Pancreas (tissue), 10 donors: ENCODE measurements at regions of chr9 and their contacts with region 1.

Region 1: DNA sequence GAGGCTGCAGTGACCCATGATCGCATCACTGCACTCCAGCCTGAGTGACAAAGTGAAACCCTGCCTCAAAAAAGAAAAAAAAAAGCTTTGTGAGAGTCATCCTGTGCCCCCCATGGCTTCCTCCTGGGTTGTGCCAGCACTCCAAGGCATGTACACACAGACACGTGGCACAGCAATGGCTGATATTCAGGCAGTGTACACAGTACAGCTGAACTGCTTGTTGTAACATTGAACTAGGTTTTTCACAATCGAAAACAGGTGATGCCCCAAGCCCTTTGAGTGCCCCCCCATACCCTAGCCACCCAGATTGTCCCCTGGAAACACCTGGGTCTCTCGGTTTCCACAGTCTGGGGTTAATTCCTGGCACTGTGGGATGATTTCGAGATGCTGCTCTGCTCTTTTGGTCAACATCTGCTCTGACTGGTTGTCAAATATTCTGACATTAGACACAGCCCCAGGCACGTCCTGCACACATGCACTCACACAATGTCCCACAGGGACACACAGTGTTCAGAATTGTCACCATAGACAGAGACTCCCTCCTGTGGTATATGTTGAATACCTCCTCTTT is 9.2 kb downstream of the SPINK4 start:
- DNase-seq: no peak
- ATAC-seq: no peak
- H3K4me3 ChIP-seq: no peak overlapping the region
- H3K27ac ChIP-seq: no peak overlapping the region
- H3K4me1 ChIP-seq: no peaks in the 10 kb centered on the region
- H3K27me3 ChIP-seq: no peaks in the 10 kb centered on the region
- CTCF ChIP-seq: no peak

Region 2: GRCh38 chr9:32703635-32704034 is 545.5 kb before region 1 on chr9:
- intact Hi-C with region 1: no loop called
- DNase-seq: no peak
- ATAC-seq: no peak
- H3K4me3 ChIP-seq: no peak overlapping the region
- H3K27ac ChIP-seq: no peak overlapping the region
- H3K4me1 ChIP-seq: no peaks in the 10 kb centered on the region
- H3K27me3 ChIP-seq: no peaks in the 10 kb centered on the region
- CTCF ChIP-seq: no peak

Region 3: GRCh38 chr9:33106827-33107621 is 142.1 kb before region 1 on chr9:
- intact Hi-C with region 1: no loop called
- DNase-seq: peak in 2 of 6 donors; percentile 34 to 42
- ATAC-seq: peak; percentile 44 to 64 (median 54)
- H3K4me3 ChIP-seq: no peak overlapping the region
- H3K27ac ChIP-seq: peak overlapping the region in 2 of 4 donors; percentile 21 to 44
- H3K4me1 ChIP-seq: peaks cover 0 to 9% (median 0%) of the 10 kb centered on the region in 3 donors
- H3K27me3 ChIP-seq: no peaks in the 10 kb centered on the region
- CTCF ChIP-seq: no peak

Region 4: DNA sequence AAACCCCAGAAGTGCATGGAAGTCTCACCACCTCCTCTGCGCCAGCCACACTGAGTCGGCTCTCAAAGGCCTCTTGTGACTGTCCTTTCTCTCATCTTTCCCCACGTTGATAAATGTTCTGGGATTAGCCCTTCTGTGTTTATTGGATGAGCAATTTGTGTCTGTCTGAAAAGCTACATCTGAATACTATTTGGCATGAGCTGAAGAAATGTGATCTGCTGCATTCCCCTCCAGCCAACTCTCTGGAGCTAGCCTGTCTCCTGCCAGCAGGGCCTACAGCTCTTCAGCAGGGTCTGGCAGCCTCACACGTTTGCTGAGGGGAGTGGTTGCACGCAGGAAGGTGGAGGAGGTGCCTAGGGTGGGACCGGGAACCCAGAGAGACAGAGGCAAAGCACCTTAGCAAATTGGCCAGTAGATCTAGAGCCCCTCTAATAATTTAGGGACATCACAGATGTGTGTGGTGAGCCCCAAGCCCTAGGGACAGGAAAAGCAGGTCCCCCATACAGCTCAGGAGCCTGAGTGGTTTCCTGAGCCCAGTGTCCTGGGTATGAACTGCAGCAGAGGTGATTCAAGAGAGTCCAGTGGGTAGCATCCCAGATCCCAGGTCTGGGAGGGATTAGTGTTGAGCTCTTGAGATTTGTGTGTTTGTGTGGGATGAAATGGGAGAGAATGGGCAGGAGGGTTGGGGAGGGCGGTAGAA is 61.5 kb before region 1 on chr9:
- intact Hi-C with region 1: loop called in 1 of 3 experiments (anchors 10 kb)
- DNase-seq: no peak
- ATAC-seq: no peak
- H3K4me3 ChIP-seq: no peak overlapping the region
- H3K27ac ChIP-seq: no peak overlapping the region
- H3K4me1 ChIP-seq: peaks cover 0 to 13% (median 0%) of the 10 kb centered on the region in 3 donors
- H3K27me3 ChIP-seq: no peaks in the 10 kb centered on the region
- CTCF ChIP-seq: no peak

Region 5: DNA sequence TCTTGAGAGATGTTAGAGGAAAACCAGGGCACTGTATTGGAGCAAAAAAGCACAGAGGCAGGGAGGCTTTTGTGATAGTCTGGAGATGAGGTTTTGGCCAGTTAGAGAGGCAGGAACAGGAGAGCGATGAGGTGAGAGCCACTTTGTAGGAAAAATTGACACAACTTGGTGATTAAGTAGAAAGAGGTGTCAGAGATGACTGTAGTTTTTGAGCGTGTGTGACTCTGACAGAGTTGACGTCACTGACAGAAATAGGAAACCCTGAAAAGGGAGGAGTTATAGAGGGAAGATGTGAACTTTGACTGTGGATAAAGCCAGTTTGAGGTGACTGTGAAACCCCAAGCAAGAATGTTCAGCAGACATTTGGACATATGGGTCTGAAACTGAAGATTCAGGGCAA is 56.9 kb after region 1 on chr9:
- intact Hi-C with region 1: loop called in 1 of 3 experiments (anchors 10 kb)
- DNase-seq: no peak
- ATAC-seq: no peak
- H3K4me3 ChIP-seq: no peak overlapping the region
- H3K27ac ChIP-seq: no peak overlapping the region
- H3K4me1 ChIP-seq: peaks cover 0 to 16% (median 14%) of the 10 kb centered on the region in 3 donors
- H3K27me3 ChIP-seq: no peaks in the 10 kb centered on the region
- CTCF ChIP-seq: no peak

Region 6: DNA sequence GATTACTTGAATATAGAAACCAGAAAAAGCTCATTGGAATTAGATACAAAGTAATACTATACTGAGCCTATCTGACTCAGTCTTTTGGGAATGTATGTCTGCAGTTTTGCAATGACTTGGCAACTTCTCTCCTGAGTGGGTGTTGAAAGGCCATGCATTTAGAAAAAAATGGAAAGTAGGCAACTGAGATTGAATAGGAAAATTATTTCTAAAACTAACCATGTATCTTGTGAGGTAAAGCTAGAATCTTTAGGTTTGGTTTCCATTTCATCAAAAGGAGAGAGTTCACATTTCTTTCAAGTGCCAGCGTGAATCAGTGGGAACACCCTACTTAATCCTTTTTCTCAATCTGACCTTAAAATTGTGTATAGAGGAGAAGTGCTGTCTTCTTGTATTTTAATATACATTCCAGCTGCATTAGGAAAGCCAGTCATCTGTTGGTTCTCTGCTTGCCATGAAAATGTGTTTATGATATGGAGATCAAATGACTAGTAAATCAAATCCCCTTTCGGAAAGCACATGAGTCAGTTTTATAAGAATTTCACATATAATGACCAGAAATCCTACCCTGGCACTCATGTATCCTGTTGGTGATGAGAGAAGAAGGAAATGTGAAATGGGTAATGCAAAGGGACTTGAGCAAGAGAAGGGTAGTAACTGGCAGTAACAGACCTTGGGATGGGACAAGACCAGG is 71.5 kb after region 1 on chr9:
- intact Hi-C with region 1: no loop called
- DNase-seq: no peak
- ATAC-seq: peak in 2 of 4 donors; percentile 57 to 61
- H3K4me3 ChIP-seq: no peak overlapping the region
- H3K27ac ChIP-seq: no peak overlapping the region
- H3K4me1 ChIP-seq: no peaks in the 10 kb centered on the region
- H3K27me3 ChIP-seq: no peaks in the 10 kb centered on the region
- CTCF ChIP-seq: no peak